Activated B cell treated with CpG ODN at 0.5 μM for 24 hours (primary cell): ENCODE measurements at regions of chr19 and their contacts with region 1.

Region 1: GRCh38 chr19:49877020-49877878 is at the starts of genes AKT1S1 and TBC1D17:
- DNase-seq: peak; percentile 94
- ATAC-seq: peak; percentile 68
- H3K4me3 Mint-ChIP-seq: no peak within 1 kb of the TSS
- H3K27ac Mint-ChIP-seq: no peak within 1 kb of the TSS
- H3K4me1 Mint-ChIP-seq: peaks cover 25% of the 10 kb centered on the region
- H3K27me3 Mint-ChIP-seq: no peaks in the 10 kb centered on the region
- CTCF ChIP-seq: no peak
- total RNA-seq, gene AKT1S1: 21.3 and 28.7 TPM in 2 replicates
- total RNA-seq, gene TBC1D17: 51.1 and 57.0 TPM in 2 replicates

Region 2: GRCh38 chr19:48993175-48994034 is 883.8 kb before region 1 on chr19 and contains the starts of genes GYS1 and RUVBL2:
- CTCF ChIA-PET with region 1: no interaction called
- POLR2A ChIA-PET with region 1: no interaction called
- intact Hi-C with region 1: loop called (anchors 10 kb)
- DNase-seq: peak; percentile 96
- ATAC-seq: peak; percentile 92
- H3K4me3 Mint-ChIP-seq: peak within 1 kb of the TSS; percentile 97
- H3K27ac Mint-ChIP-seq: peak within 1 kb of the TSS; percentile 97
- H3K4me1 Mint-ChIP-seq: peaks cover 33% of the 10 kb centered on the region
- H3K27me3 Mint-ChIP-seq: no peaks in the 10 kb centered on the region
- CTCF ChIP-seq: peak; percentile 94
- total RNA-seq, gene GYS1: 50.7 and 52.7 TPM in 2 replicates
- total RNA-seq, gene RUVBL2: 75.6 and 79.4 TPM in 2 replicates

Region 3: GRCh38 chr19:49580264-49581006 is 296.8 kb before region 1 on chr19 and contains the start of gene NOSIP:
- CTCF ChIA-PET with region 1: no interaction called
- POLR2A ChIA-PET with region 1: no interaction called
- intact Hi-C with region 1: loop called (anchors 1 kb)
- DNase-seq: peak; percentile 87
- ATAC-seq: peak; percentile 98
- H3K4me3 Mint-ChIP-seq: peak within 1 kb of the TSS; percentile 92
- H3K27ac Mint-ChIP-seq: peak within 1 kb of the TSS; percentile 84
- H3K4me1 Mint-ChIP-seq: peaks cover 24% of the 10 kb centered on the region
- H3K27me3 Mint-ChIP-seq: no peaks in the 10 kb centered on the region
- CTCF ChIP-seq: no peak
- total RNA-seq, gene NOSIP: 49.9 and 54.8 TPM in 2 replicates

Region 4: GRCh38 chr19:49817964-49818648 is 59.1 kb before region 1 on chr19 and contains the start of gene MED25:
- CTCF ChIA-PET with region 1: interaction called, 4 read pairs
- POLR2A ChIA-PET with region 1: interaction called, 17 read pairs
- intact Hi-C with region 1: loop called (anchors 1 kb)
- DNase-seq: peak; percentile 91
- ATAC-seq: peak; percentile 59
- H3K4me3 Mint-ChIP-seq: peak within 1 kb of the TSS; percentile 98
- H3K27ac Mint-ChIP-seq: peak within 1 kb of the TSS; percentile 99
- H3K4me1 Mint-ChIP-seq: peaks cover 40% of the 10 kb centered on the region
- H3K27me3 Mint-ChIP-seq: no peaks in the 10 kb centered on the region
- CTCF ChIP-seq: no peak
- total RNA-seq, gene MED25: 70.1 and 88.8 TPM in 2 replicates

Region 5: GRCh38 chr19:49896863-49897621 is 19.8 kb after region 1 on chr19 and contains the start of gene IL4I1:
- CTCF ChIA-PET with region 1: interaction called, 4 read pairs
- POLR2A ChIA-PET with region 1: interaction called, 42 read pairs
- intact Hi-C with region 1: loop called (anchors 1 kb)
- DNase-seq: peak; percentile 76
- ATAC-seq: peak; percentile 72
- H3K4me3 Mint-ChIP-seq: peak within 1 kb of the TSS; percentile 87
- H3K27ac Mint-ChIP-seq: peak within 1 kb of the TSS; percentile 99
- H3K4me1 Mint-ChIP-seq: peaks cover 67% of the 10 kb centered on the region
- H3K27me3 Mint-ChIP-seq: no peaks in the 10 kb centered on the region
- CTCF ChIP-seq: no peak
- total RNA-seq, gene IL4I1: 24.0 and 25.5 TPM in 2 replicates

Region 6: GRCh38 chr19:49983645-49984229 is 106.5 kb after region 1 on chr19:
- CTCF ChIA-PET with region 1: no interaction called
- POLR2A ChIA-PET with region 1: no interaction called
- intact Hi-C with region 1: loop called (anchors 2 kb)
- DNase-seq: peak; percentile 66
- ATAC-seq: peak; percentile 74
- H3K4me3 Mint-ChIP-seq: no peak overlapping the region
- H3K27ac Mint-ChIP-seq: no peak overlapping the region
- H3K4me1 Mint-ChIP-seq: peaks cover 2% of the 10 kb centered on the region
- H3K27me3 Mint-ChIP-seq: no peaks in the 10 kb centered on the region
- CTCF ChIP-seq: peak; percentile 63

Region 7: GRCh38 chr19:50511068-50511822 is 634.0 kb after region 1 on chr19 and contains the start of gene JOSD2:
- CTCF ChIA-PET with region 1: no interaction called
- POLR2A ChIA-PET with region 1: interaction called, 3 read pairs
- intact Hi-C with region 1: loop called (anchors 2 kb)
- DNase-seq: peak; percentile 96
- ATAC-seq: peak; percentile 94
- H3K4me3 Mint-ChIP-seq: peak within 1 kb of the TSS; percentile 89
- H3K27ac Mint-ChIP-seq: peak within 1 kb of the TSS; percentile 93
- H3K4me1 Mint-ChIP-seq: peaks cover 13% of the 10 kb centered on the region
- H3K27me3 Mint-ChIP-seq: peaks cover 5% of the 10 kb centered on the region
- CTCF ChIP-seq: no peak
- total RNA-seq, gene JOSD2: 21.0 and 23.7 TPM in 2 replicates